SK-N-SH (cell line): ENCODE measurements at regions of chr1 and their contacts with region 1.

Region 1: DNA sequence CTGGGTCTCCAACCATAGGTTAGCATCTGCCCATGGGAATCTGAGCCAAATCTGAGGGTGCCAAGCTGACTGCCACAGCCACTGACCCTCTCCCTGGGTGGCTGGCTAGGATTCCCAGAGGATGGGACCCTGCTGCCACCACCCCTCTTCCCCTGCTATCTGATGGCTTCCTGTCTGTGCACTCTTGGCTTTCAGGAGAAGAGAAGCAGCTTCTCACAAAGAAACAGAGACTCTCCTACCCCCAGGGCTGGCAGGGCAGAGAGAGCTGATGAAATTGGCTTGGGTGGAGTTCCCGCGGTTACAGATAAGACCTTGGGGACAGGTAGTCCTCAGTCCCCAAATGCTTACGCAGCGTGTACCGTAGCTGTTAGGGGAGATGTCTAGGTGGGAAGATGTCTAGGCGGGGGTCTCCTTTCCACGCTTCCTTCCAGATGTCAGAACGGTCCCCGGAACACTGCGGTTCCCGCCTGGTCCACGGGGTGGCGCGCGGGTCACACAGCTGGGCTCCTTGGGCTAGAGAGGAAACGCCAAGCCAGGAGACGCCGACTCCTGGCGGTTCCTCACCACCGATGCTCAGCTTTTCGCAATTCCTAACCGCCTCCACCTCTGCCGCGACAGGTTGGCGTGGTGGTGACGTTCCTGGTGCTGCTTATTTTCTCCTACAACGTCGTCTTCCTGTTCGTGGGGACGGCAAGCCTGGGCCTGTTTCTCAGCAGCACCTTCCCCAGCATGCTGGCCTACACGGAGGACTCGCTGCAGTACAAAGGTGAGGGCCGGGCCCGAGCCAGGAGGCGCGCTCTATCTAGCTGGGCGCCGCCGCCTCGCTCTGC is 40.1 kb downstream of the ELK4 start:
- DNase-seq: peak; percentile 87
- H3K4me3 ChIP-seq: peak overlapping the region; percentile 41 to 59
- H3K27ac ChIP-seq: peak overlapping the region in 1 of 2 experiments; percentile 36; a peak in 1 of 4 replicates
- H3K4me1 ChIP-seq: peaks cover 0 to 10% of the 10 kb centered on the region in 2 experiments; a peak in 1 of 4 replicates
- H3K27me3 ChIP-seq: no peaks in the 10 kb centered on the region
- CTCF ChIP-seq: peak; percentile 97
- EP300 ChIP-seq: no peak
- RAD21 ChIP-seq: peak; percentile 95

Region 2: GRCh38 chr1:205536759-205537361 is 54.9 kb before region 1 on chr1:
- CTCF ChIA-PET with region 1: interaction called, 17 read pairs
- POLR2A ChIA-PET with region 1: no interaction called
- DNase-seq: no peak
- H3K4me3 ChIP-seq: no peak overlapping the region
- H3K27ac ChIP-seq: no peak overlapping the region
- H3K4me1 ChIP-seq: peaks cover 0 to 12% of the 10 kb centered on the region in 2 experiments; a peak in 1 of 4 replicates
- H3K27me3 ChIP-seq: no peaks in the 10 kb centered on the region
- CTCF ChIP-seq: no peak
- EP300 ChIP-seq: no peak
- RAD21 ChIP-seq: no peak

Region 3: GRCh38 chr1:205578780-205579606 is 12.7 kb before region 1 on chr1:
- CTCF ChIA-PET with region 1: interaction called, 57 read pairs
- POLR2A ChIA-PET with region 1: no interaction called
- DNase-seq: no peak
- H3K4me3 ChIP-seq: no peak overlapping the region
- H3K27ac ChIP-seq: no peak overlapping the region
- H3K4me1 ChIP-seq: peaks cover 0 to 21% of the 10 kb centered on the region in 2 experiments; a peak in 2 of 4 replicates
- H3K27me3 ChIP-seq: peaks cover 10% of the 10 kb centered on the region; the same call in 1 of the 2 replicates
- CTCF ChIP-seq: no peak
- EP300 ChIP-seq: no peak
- RAD21 ChIP-seq: no peak

Region 4: DNA sequence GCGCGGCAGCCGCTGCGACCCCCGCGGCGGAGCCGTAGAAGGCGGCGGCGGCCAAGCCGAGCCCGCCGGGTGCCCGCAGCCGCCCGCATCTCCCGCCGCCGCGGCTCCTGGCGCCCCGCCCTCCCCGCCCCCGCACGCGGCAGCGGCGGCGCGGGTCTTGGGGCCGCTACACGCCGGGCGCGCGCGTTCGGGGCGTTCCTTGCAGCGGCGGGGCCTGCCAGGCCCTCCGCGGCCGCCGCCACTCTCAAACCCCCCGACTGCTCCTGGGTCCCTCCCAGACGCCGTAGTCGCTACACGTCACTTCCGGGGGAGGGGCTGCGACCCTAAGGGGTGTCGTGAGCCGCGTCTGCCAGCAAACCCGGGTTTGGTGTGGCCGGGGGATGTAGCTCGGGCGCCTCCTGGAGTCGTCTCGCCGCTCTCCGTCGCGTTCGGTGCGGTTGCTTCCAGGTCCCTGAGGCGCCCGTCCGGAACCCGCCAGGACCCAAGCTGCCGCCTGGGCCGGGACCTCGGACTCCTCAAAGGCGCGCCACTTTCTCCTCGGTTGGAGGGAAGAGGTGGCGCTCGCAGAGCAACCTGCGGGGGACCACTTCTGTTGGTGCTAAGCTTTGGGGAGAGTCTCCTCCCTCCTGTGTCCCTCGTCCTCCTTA is 40.1 kb after region 1 on chr1 and contains the start of gene ELK4:
- CTCF ChIA-PET with region 1: interaction called, 92 read pairs
- POLR2A ChIA-PET with region 1: interaction called, 12 read pairs
- DNase-seq: peak; percentile 98
- H3K4me3 ChIP-seq: peak within 1 kb of the TSS; percentile 77 to 83
- H3K27ac ChIP-seq: peak within 1 kb of the TSS; percentile 95
- H3K4me1 ChIP-seq: peaks cover 0 to 9% of the 10 kb centered on the region in 2 experiments; a peak in 2 of 4 replicates
- H3K27me3 ChIP-seq: no peaks in the 10 kb centered on the region
- CTCF ChIP-seq: peak; percentile 73
- EP300 ChIP-seq: peak in 1 of 2 experiments; percentile 36; a peak in 1 of 4 replicates
- RAD21 ChIP-seq: peak; percentile 77
- polyA plus RNA-seq, gene ELK4: 2.6 and 3.8 TPM in 2 replicates

Region 5: DNA sequence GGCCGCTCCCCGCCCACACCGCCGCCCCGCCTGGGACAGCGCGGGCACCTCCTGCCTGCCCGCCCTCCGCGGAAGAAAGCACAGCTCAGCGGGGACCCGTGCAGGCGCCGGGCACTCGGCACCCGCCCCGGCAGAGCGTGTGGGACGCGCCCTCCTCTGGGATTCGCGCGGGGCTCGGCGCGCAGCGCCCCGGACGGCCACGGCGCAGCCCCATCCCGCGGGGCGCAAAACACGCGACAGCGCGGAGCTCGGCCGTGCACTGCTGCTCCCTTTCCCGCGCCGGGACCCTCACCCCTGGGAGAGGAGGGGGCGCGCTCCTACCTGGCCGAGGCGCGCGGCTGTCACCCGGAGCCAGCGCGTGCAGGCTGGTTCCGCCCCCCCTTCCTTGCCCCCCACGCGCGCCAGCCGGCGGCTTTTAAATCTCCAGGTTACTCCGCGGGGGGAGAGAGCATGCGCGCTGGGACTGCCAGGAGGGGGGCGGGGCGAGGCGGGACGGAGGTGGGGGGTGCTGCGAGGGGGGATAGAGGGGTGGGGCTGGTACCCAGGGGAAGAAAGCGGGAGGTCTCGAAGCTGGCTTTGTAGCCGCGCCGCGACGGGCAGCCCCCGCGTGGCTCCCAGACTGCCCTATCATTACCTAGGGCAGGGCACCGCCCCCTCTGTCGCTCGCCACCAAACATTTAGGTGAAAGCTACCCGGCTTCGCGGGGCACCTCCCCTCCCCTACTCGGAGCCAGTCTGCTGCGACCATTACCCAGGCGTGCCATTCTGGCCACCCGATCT is 88.5 kb after region 1 on chr1 and contains the start of gene SLC45A3:
- CTCF ChIA-PET with region 1: interaction called, 13 read pairs
- POLR2A ChIA-PET with region 1: no interaction called
- DNase-seq: peak; percentile 94
- H3K4me3 ChIP-seq: peak within 1 kb of the TSS; percentile 70 to 78
- H3K27ac ChIP-seq: peak within 1 kb of the TSS in 1 of 2 experiments; percentile 56; a peak in 2 of 4 replicates
- H3K4me1 ChIP-seq: peaks cover 8 to 12% of the 10 kb centered on the region in 2 experiments; a peak in 1 of 4 replicates
- H3K27me3 ChIP-seq: no peaks in the 10 kb centered on the region
- CTCF ChIP-seq: no peak
- EP300 ChIP-seq: no peak
- RAD21 ChIP-seq: no peak
- polyA plus RNA-seq, gene SLC45A3: 4.6 and 4.7 TPM in 2 replicates